Activated CD4-positive, alpha-beta T cell treated with anti-CD3 and anti-CD28 coated beads, Interleukin-2, amount 10 ng/mL, durations not matched to agents 24 days and 14 days (primary cell): ENCODE measurements at regions of chr13 and their contacts with region 1.

Region 1: GRCh38 chr13:98445340-98446233 is 131.3 kb downstream of the STK24 start:
- DNase-seq: peak; percentile 92
- H3K4me3 Mint-ChIP-seq: no peak overlapping the region
- H3K27ac Mint-ChIP-seq: peak overlapping the region; percentile 65
- H3K4me1 Mint-ChIP-seq: peaks cover 11% of the 10 kb centered on the region
- H3K27me3 Mint-ChIP-seq: no peaks in the 10 kb centered on the region

Region 2: GRCh38 chr13:98158172-98158899 is 287.3 kb before region 1 on chr13:
- intact Hi-C with region 1: no loop called
- DNase-seq: no peak
- H3K4me3 Mint-ChIP-seq: no peak overlapping the region
- H3K27ac Mint-ChIP-seq: no peak overlapping the region
- H3K4me1 Mint-ChIP-seq: no peaks in the 10 kb centered on the region
- H3K27me3 Mint-ChIP-seq: peaks cover 10% of the 10 kb centered on the region

Region 3: DNA sequence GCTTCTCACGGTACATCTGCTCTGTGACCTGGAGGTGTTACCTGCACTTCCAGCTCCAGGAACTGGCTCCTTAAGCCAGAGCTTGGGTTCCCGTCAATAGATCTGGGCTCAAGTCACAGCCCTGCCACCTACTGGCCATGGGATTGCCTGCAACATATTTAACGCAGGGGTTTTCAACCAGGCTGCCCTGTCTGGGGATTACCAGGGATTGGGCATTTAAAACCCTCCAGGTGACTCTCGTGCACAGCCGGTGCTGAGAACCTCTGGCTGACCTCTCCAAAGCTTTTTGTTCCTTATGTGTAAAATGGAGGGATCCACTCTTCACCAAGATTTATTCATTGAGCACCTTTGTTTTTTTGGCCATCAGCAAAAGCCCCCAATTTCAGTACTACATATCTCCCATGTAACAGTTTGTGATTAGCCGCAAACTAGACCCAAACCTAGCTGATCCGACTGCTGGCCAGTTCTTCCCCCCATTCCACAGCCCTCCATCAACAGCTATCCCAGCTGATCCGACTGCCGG is 207.9 kb after region 1 on chr13:
- intact Hi-C with region 1: loop called (anchors 1 kb)
- DNase-seq: peak; percentile 91
- H3K4me3 Mint-ChIP-seq: no peak overlapping the region
- H3K27ac Mint-ChIP-seq: no peak overlapping the region
- H3K4me1 Mint-ChIP-seq: peaks cover 4% of the 10 kb centered on the region
- H3K27me3 Mint-ChIP-seq: peaks cover 5% of the 10 kb centered on the region

Region 4: DNA sequence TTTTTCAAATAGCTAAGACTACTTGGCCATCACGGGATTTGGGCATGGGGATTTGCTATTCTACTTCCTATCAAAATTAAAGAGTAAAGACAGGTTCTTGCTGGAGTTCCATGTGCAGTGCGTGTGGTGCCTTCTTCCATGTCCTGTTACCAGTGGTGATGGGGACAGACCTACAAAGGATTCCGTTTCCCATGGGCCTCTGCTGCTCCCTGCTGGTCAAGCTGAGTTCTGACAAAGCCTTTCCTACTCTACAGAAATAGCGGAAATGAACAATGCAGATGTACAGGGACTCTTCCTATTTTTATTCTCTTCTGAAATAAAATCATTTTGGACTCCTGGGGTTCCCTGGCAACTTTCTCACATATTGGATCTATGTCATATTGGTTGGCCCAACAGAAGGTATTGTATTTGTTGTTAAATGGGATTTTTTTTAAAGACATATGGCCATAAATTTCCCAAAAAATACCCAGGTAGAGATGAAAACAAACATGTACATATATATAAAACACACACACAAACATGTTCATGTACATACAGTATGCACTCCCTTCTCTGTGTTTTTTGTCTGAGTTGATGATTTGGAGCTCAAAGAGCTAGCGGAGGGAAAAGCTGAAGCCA is 397.4 kb after region 1 on chr13:
- intact Hi-C with region 1: loop called (anchors 10 kb)
- DNase-seq: peak; percentile 88
- H3K4me3 Mint-ChIP-seq: no peak overlapping the region
- H3K27ac Mint-ChIP-seq: no peak overlapping the region
- H3K4me1 Mint-ChIP-seq: peaks cover 7% of the 10 kb centered on the region
- H3K27me3 Mint-ChIP-seq: no peaks in the 10 kb centered on the region